BJ (cell line): ENCODE measurements at regions of chr11 and their contacts with region 1.

Region 1: DNA sequence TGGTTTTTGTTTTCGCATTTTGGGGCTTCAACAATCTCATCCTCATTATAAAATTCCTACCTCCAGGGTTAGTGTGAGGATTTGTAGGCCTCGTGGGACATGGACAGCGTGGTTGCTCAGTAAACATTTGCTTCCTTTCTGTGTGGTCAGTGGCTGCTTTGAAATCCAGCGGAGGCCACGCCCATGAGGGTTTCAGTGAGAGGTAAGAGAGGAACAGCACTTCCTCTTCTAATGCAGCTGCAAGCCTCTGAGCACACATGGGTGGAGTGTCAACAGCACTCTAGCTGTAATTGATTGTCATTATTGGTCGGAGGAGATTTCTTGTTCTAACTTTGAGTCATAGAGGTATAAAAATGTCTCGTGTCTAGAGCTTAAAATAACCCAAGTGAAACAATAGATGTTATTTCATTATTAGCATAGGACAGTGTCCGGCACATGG is 6.0 kb upstream of the ARHGAP42 start:
- DNase-seq: no peak
- H3K4me3 ChIP-seq: no peak overlapping the region
- H3K27me3 ChIP-seq: no peaks in the 10 kb centered on the region
- CTCF ChIP-seq: no peak

Region 2: DNA sequence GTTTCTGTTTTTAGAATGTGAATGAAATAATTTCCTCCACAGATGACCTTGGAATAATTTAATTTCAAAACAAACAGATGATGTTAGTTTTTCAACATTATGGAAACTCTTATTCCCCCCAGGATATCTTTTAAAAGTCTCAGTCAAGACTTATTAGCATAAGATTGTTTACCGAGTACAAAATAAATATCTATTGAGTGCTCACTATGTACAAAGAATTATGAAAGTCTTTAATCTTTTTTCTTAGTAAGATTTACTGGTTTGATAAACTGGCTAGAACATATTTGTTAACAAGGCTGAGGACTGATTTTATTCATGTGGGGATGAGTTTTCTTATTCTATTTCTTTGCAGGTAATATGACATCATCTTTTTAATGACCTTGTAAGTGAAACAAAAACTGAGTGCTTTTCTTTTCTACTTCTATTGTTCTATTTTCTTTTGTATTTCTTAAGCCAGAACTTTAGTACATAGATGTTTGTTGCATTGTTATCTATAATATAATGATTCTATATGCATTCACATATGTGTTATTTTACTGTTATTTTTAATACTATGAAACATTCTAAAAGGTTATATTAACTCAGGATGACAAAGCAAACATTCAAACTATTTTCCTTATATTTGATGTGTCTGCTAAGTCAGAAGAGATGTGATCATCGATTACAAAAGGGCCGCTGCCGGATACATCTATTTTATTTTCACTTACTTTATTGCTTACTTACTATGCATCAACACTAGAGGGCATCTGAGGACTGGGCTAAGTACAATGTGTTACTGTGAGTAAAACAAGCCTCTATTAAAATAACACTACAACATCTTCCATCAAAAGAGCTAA is 105.0 kb before region 1 on chr11:
- CTCF ChIA-PET with region 1: interaction called, 15 read pairs
- POLR2A ChIA-PET with region 1: no interaction called
- DNase-seq: no peak
- H3K4me3 ChIP-seq: no peak overlapping the region
- H3K27me3 ChIP-seq: no peaks in the 10 kb centered on the region
- CTCF ChIP-seq: peak; percentile 80

Region 3: GRCh38 chr11:100857236-100858005 is 176.3 kb after region 1 on chr11:
- CTCF ChIA-PET with region 1: interaction called, 15 read pairs
- POLR2A ChIA-PET with region 1: no interaction called
- DNase-seq: no peak
- H3K4me3 ChIP-seq: no peak overlapping the region
- H3K27me3 ChIP-seq: no peaks in the 10 kb centered on the region
- CTCF ChIP-seq: no peak

Region 4: GRCh38 chr11:100930185-100930778 is 249.2 kb after region 1 on chr11:
- CTCF ChIA-PET with region 1: interaction called, 11 read pairs
- POLR2A ChIA-PET with region 1: no interaction called
- DNase-seq: no peak
- H3K4me3 ChIP-seq: no peak overlapping the region
- H3K27me3 ChIP-seq: no peaks in the 10 kb centered on the region
- CTCF ChIP-seq: peak; percentile 49